ENCODE measurements at regions of chr1 and their contacts with region 1.

Region 1: DNA sequence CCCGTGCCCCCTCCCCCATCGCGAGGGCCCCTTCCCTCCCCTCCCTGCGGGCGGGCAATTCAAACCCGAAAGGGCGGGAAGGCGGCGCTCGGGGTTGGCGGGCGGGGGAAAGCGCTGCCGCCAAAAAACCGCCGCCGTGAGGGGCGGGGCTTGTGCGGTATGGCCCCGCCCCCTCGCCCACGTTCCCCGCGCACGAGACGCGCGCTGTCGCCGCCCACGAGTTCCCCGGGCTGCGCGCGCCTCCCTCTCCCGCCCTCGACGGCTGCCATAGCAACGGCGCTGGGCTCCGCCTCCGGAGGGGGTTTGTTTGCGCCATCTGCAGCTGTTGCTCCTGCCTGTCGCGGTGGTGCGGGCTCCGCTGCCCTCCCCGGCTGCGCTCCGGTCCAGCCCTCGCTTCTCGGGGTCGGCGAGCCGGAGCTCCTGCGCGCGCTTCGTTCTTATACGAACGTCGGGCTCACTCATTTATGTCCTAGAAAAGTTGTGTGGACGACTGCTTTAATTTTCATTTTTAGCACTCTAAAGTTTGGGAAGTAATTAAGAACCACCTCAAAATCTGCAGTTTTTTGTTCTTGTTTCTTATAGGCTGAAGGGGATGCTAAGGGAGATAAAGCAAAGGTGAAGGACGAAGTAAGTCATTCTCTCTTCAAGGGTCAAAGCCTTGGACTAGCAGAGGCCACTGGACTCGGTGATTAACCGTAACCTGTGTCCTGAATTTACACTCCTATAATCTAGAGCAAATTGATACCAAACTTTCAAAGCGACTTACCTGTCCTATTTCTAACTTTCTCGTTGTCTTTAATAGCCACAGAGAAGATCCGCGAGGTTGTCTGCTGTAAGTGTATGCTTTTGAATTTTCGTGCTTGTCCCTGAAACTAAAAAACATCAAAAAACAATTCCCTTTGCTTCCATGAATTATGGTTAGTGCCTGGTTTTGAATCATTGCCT is 933 bp downstream of the HMGN2 start:
- DNase-seq: peak; percentile 85
- ATAC-seq: peak; percentile 72
- H3K4me3 ChIP-seq: peak overlapping the region; percentile 78 to 86 (median 85)
- H3K27ac ChIP-seq: peak overlapping the region; percentile 100
- H3K4me1 ChIP-seq: peaks cover 31% of the 10 kb centered on the region
- H3K27me3 ChIP-seq: no peaks in the 10 kb centered on the region; a peak in 1 of 5 replicates
- CTCF ChIP-seq: no peak
- EP300 ChIP-seq: peak in 1 of 2 experiments; percentile 16; a peak in 1 of 4 replicates
- POLR2A ChIP-seq: peak in 1 of 2 experiments; percentile 12; a peak in 2 of 4 replicates
- RAD21 ChIP-seq: peak; percentile 34

Region 2: GRCh38 chr1:26431979-26432695 is 41.0 kb before region 1 on chr1 and contains the start of gene DHDDS:
- CTCF ChIA-PET with region 1: no interaction called
- POLR2A ChIA-PET with region 1: interaction called, 13 read pairs
- in situ Hi-C with region 1: no loop called
- intact Hi-C with region 1: no loop called
- DNase-seq: peak; percentile 91
- ATAC-seq: peak; percentile 97
- H3K4me3 ChIP-seq: peak within 1 kb of the TSS; percentile 75 to 97 (median 84)
- H3K27ac ChIP-seq: peak within 1 kb of the TSS; percentile 58
- H3K4me1 ChIP-seq: peaks cover 25% of the 10 kb centered on the region
- H3K27me3 ChIP-seq: peaks cover 0 to 4% of the 10 kb centered on the region in 2 experiments; a peak in 1 of 5 replicates
- CTCF ChIP-seq: no peak
- EP300 ChIP-seq: peak in 1 of 2 experiments; percentile 40; a peak in 1 of 4 replicates
- POLR2A ChIP-seq: peak; percentile 86
- RAD21 ChIP-seq: no peak
- total RNA-seq, gene DHDDS: 26.5 and 28.3 TPM in 2 replicates

Region 3: DNA sequence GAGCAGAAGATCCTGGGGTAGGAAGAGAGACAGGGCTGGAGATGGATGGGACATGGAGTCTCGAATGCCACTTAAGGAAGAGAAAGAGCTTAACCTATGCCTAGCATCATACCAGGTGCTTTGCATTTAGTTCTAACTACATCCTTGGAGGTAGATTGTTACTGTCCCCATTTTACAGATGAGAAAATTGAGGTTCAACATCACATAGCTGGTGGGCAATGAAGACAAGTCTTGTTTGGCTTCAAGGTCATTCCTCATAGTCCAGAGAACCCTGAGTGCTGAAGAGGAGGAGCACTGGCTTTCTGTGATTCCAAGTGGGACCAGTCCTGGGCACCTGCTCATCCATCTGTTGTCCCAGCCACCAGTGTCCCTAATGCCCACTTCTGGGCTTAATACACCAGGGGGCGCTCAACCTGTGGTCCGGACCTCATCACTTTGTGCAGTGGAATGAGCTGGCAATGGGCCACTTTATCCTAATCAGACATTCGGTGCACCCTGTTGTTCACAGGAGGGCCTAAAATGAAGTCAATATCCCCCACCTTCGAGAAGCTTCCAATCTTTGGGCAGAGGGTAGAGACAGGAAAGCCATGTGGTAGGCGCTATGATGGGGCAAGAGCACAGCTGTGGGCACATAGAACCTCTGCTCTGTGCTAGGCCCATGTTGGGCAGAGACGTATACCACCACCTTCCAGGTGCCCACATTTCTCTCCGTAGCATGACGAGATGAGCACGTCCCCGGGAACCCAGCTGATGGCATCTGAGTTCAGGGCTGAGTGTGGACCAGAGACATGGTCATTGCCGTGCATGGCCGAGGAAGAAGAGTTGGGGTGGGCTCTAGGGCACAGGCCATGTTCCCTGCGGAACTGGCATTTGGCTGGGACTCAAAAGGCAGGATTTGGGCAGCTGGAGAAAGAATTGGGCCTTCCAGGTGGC is 65.6 kb after region 1 on chr1:
- CTCF ChIA-PET with region 1: no interaction called
- POLR2A ChIA-PET with region 1: no interaction called
- in situ Hi-C with region 1: no loop called
- intact Hi-C with region 1: no loop called
- DNase-seq: peak; percentile 41
- ATAC-seq: peak; percentile 36
- H3K4me3 ChIP-seq: no peak overlapping the region
- H3K27ac ChIP-seq: no peak overlapping the region
- H3K4me1 ChIP-seq: peaks cover 44% of the 10 kb centered on the region
- H3K27me3 ChIP-seq: no peaks in the 10 kb centered on the region
- CTCF ChIP-seq: peak; percentile 62
- EP300 ChIP-seq: no peak
- POLR2A ChIP-seq: no peak
- RAD21 ChIP-seq: no peak